ENCODE measurements at regions of chr16 and their contacts with region 1.

Region 1: GRCh38 chr16:85027349-85027957 is at the start of gene KIAA0513:
- DNase-seq: peak; percentile 96
- ATAC-seq: peak; percentile 92
- H3K4me3 ChIP-seq: peak within 1 kb of the TSS; percentile 57 to 84 (median 80)
- H3K4me3 Mint-ChIP-seq: peak within 1 kb of the TSS; percentile 94
- H3K27ac ChIP-seq: peak within 1 kb of the TSS; percentile 52 to 75
- H3K27ac Mint-ChIP-seq: peak within 1 kb of the TSS; percentile 89
- H3K4me1 ChIP-seq: peaks cover 28 to 33% of the 10 kb centered on the region in 2 donors
- H3K4me1 Mint-ChIP-seq: peaks cover 42% of the 10 kb centered on the region
- H3K27me3 ChIP-seq: peaks cover 0 to 6% (median 2%) of the 10 kb centered on the region in 4 experiments
- H3K27me3 Mint-ChIP-seq: peaks cover 13% of the 10 kb centered on the region
- CTCF ChIP-seq: no peak
- total RNA-seq, gene KIAA0513: 1.1 and 1.7 TPM in 2 replicates

Region 2: GRCh38 chr16:84144859-84145639 is 882.4 kb before region 1 on chr16 and contains the starts of genes DNAAF1 and HSDL1:
- CTCF ChIA-PET with region 1: no interaction called
- POLR2A ChIA-PET with region 1: no interaction called
- intact Hi-C with region 1: loop called (anchors 5 kb)
- DNase-seq: peak; percentile 96
- ATAC-seq: peak; percentile 88
- H3K4me3 ChIP-seq: peak within 1 kb of the TSS; percentile 46 to 80 (median 75)
- H3K4me3 Mint-ChIP-seq: peak within 1 kb of the TSS; percentile 96
- H3K27ac ChIP-seq: peak within 1 kb of the TSS; percentile 34 to 86
- H3K27ac Mint-ChIP-seq: peak within 1 kb of the TSS; percentile 91
- H3K4me1 ChIP-seq: peaks cover 3 to 14% of the 10 kb centered on the region in 2 donors
- H3K4me1 Mint-ChIP-seq: peaks cover 14% of the 10 kb centered on the region
- H3K27me3 ChIP-seq: peaks cover 0 to 2% (median 0%) of the 10 kb centered on the region in 4 experiments
- H3K27me3 Mint-ChIP-seq: peaks cover 16% of the 10 kb centered on the region
- CTCF ChIP-seq: no peak
- total RNA-seq, gene DNAAF1: 0.29 and 0.30 TPM in 2 replicates
- total RNA-seq, gene HSDL1: 30.8 and 40.2 TPM in 2 replicates

Region 3: GRCh38 chr16:84687715-84688114 is 339.7 kb before region 1 on chr16:
- CTCF ChIA-PET with region 1: no interaction called
- POLR2A ChIA-PET with region 1: no interaction called
- intact Hi-C with region 1: no loop called
- DNase-seq: peak; percentile 72
- ATAC-seq: peak; percentile 97
- H3K4me3 ChIP-seq: no peak overlapping the region
- H3K4me3 Mint-ChIP-seq: peak overlapping the region; percentile 74
- H3K27ac ChIP-seq: no peak overlapping the region
- H3K27ac Mint-ChIP-seq: peak overlapping the region; percentile 85
- H3K4me1 ChIP-seq: peaks cover 10 to 17% of the 10 kb centered on the region in 2 donors
- H3K4me1 Mint-ChIP-seq: peaks cover 21% of the 10 kb centered on the region
- H3K27me3 ChIP-seq: no peaks in the 10 kb centered on the region
- H3K27me3 Mint-ChIP-seq: peaks cover 7% of the 10 kb centered on the region
- CTCF ChIP-seq: no peak

Region 4: DNA sequence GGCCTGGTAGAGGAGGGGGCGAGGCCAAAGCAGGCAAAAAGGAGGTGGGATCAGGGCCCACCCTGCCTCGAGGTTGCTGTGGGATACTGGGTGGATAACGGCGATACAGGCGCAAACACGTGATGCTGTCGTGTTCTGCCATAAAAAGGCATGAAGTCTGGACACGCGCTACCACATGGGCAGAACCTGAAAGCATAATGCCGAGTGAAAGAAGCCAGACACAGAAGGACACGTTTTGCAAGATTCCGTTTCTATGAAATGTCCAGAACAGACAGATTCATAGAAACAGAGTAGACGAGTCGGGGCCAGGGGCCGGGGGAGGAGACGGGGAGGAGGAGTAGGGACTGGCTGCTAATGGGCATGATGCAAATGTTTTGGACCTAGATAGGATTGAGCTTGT is 59.6 kb before region 1 on chr16:
- CTCF ChIA-PET with region 1: no interaction called
- POLR2A ChIA-PET with region 1: no interaction called
- intact Hi-C with region 1: no loop called
- DNase-seq: no peak
- ATAC-seq: no peak
- H3K4me3 ChIP-seq: no peak overlapping the region
- H3K4me3 Mint-ChIP-seq: no peak overlapping the region
- H3K27ac ChIP-seq: no peak overlapping the region
- H3K27ac Mint-ChIP-seq: no peak overlapping the region
- H3K4me1 ChIP-seq: peaks cover 3 to 5% of the 10 kb centered on the region in 2 donors
- H3K4me1 Mint-ChIP-seq: peaks cover 4% of the 10 kb centered on the region
- H3K27me3 ChIP-seq: peaks cover 0 to 7% (median 0%) of the 10 kb centered on the region in 4 experiments
- H3K27me3 Mint-ChIP-seq: peaks cover 3% of the 10 kb centered on the region
- CTCF ChIP-seq: no peak

Region 5: DNA sequence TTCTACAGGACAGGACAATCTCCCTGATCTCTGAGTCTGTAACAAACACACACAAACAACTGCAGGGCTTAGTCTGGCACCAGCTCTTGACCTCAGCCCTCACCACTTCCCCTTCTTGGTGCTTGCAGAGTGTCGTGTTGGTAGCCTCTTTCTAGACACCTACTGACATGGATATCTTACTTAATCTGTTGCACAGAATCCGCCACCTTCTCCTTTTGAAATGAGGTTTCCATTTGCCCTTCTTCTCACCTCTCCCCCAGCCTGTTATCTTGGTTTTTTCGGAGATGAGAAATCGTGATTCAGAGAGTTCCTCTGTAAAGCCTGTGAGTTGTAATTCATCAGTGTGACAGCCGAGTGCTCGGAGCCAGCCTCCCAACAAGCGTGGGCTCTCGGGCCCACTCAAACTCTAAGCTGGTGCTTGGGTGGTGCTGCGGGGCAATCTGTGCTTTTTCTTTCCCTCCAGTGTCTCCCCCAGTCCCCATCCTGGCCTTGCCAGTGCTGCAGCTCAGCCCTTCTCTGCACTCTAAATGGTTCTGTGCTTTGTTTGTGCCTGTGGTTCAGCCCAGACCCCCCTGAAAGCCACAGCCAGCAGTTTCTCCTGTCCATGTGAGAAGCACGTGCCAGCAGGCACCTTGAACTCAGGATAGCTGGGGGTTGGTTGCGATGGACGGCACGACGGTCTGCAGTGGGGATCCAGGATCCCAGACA is 28.2 kb after region 1 on chr16:
- CTCF ChIA-PET with region 1: interaction called, 6 read pairs
- POLR2A ChIA-PET with region 1: interaction called, 6 read pairs
- intact Hi-C with region 1: loop called (anchors 2 kb)
- DNase-seq: peak; percentile 83
- ATAC-seq: peak; percentile 95
- H3K4me3 ChIP-seq: peak overlapping the region; percentile 20 to 42 (median 34)
- H3K4me3 Mint-ChIP-seq: peak overlapping the region; percentile 83
- H3K27ac ChIP-seq: peak overlapping the region; percentile 35 to 59
- H3K27ac Mint-ChIP-seq: peak overlapping the region; percentile 83
- H3K4me1 ChIP-seq: peaks cover 38 to 41% of the 10 kb centered on the region in 2 donors
- H3K4me1 Mint-ChIP-seq: peaks cover 38% of the 10 kb centered on the region
- H3K27me3 ChIP-seq: peaks cover 0 to 3% (median 1%) of the 10 kb centered on the region in 4 experiments
- H3K27me3 Mint-ChIP-seq: peaks cover 13% of the 10 kb centered on the region
- CTCF ChIP-seq: no peak

Measured in B cell (primary cell).